CD8-positive, alpha-beta memory T cell (primary cell): ENCODE measurements at regions of chr17 and their contacts with region 1.

Region 1: GRCh38 chr17:59331129-59331928 is at the start of gene YPEL2:
- DNase-seq: peak; percentile 79 to 91 (median 86)
- H3K4me3 ChIP-seq: peak within 1 kb of the TSS; percentile 52
- H3K4me3 Mint-ChIP-seq: peak within 1 kb of the TSS; percentile 87 to 94 (median 92)
- H3K27ac ChIP-seq: peak within 1 kb of the TSS; percentile 48
- H3K27ac Mint-ChIP-seq: peak within 1 kb of the TSS; percentile 58 to 93 (median 86)
- H3K4me1 ChIP-seq: peaks cover 65% of the 10 kb centered on the region
- H3K4me1 Mint-ChIP-seq: peaks cover 52 to 79% (median 74%) of the 10 kb centered on the region in 3 donors
- H3K27me3 ChIP-seq: no peaks in the 10 kb centered on the region
- H3K27me3 Mint-ChIP-seq: no peaks in the 10 kb centered on the region
- total RNA-seq, gene YPEL2: 6.7 to 7.6 TPM

Region 2: DNA sequence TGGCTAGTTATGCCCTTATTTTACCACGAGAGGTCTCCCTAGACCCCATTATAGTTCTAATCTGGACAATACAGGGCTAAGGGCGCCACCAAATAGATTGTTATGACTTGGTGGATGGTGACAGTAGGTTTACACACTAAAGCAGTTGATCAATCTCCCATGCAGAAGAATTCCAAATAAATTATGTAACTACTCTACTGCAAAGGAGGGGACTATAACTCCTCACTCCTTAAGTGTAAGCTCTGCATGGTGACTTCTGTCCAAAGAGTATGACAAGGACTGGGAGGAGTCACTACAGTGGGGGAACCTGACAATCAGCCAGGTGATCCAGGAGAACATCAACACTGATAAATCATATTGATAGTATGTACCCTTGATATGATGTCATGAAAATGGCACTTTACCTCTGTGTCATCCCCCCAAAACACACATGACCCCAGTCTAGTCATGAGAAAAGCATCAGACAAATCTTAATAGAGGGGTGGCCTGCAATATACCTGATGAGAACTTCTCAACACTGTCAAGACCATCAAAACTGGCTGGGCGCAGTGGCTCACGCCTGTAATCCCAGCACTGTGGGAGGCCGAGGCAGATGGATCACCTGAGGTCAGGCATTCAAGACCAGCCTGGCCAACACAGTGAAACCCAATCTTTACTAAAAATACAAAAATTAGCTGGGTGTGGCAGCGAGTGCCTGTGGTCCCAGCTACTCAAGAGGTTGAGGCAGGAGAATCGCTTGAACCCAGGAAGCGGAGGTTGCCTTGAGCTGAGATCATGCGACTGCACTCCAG is 20.0 kb before region 1 on chr17:
- CTCF ChIA-PET with region 1: interaction called, 21 read pairs
- POLR2A ChIA-PET with region 1: no interaction called
- DNase-seq: peak in 3 of 5 donors; percentile 51 to 64 (median 51)
- H3K4me3 ChIP-seq: no peak overlapping the region
- H3K4me3 Mint-ChIP-seq: no peak overlapping the region
- H3K27ac ChIP-seq: no peak overlapping the region
- H3K27ac Mint-ChIP-seq: no peak overlapping the region
- H3K4me1 ChIP-seq: no peaks in the 10 kb centered on the region
- H3K4me1 Mint-ChIP-seq: peaks cover 0 to 6% (median 0%) of the 10 kb centered on the region in 3 donors
- H3K27me3 ChIP-seq: no peaks in the 10 kb centered on the region
- H3K27me3 Mint-ChIP-seq: peaks cover 0 to under 1% of the 10 kb centered on the region in 2 donors

Region 3: DNA sequence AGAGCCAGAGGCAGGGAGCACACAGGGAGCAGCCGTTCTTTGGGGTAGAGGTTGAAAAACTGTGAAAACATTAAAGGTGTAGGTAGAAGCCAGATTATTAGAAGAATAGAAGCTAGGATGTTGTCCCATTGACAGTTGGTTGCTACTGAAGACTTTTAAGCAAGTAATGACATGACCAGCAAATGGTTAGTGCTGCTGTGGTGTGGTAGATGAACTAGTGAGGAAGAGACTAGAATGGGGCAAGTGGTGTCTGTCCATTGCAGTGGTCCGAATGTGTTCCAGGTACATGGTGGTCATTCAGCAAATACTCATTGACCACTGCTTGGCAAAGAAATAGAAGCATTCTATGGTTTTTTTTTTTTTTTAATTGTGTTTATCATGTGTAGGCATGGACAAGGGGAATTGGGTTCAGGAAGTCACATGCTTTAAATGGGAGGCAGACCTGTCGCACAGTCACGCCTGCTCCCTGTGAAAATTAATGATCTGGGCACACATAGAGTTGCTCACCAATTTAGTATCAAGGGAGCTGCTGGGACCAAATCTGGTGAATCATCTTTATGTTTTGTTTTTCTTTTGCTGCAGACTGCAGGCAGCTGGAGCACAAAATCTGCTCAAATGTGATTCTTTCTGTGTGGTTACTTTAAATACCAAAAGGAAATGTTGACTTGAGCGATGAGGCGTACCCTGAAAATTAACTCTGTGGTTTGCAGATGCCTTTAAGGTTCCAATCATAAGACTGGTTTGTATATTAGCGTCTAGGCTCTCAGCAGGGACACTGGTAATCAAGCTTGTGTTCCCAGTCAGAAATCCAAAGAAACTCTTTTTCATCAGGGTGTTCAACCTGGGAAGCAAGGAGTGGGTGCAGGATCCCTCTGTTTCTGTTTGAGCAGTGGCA is 30.8 kb after region 1 on chr17:
- CTCF ChIA-PET with region 1: interaction called, 9 read pairs
- POLR2A ChIA-PET with region 1: interaction called, 14 read pairs
- DNase-seq: peak in 3 of 5 donors; percentile 30 to 72 (median 48)
- H3K4me3 ChIP-seq: peak overlapping the region; percentile 37
- H3K4me3 Mint-ChIP-seq: peak overlapping the region; percentile 32 to 80 (median 71)
- H3K27ac ChIP-seq: no peak overlapping the region
- H3K27ac Mint-ChIP-seq: peak overlapping the region; percentile 21 to 91 (median 66)
- H3K4me1 ChIP-seq: peaks cover 78% of the 10 kb centered on the region
- H3K4me1 Mint-ChIP-seq: peaks cover 72 to 91% (median 87%) of the 10 kb centered on the region in 3 donors
- H3K27me3 ChIP-seq: no peaks in the 10 kb centered on the region
- H3K27me3 Mint-ChIP-seq: no peaks in the 10 kb centered on the region

Region 4: GRCh38 chr17:59427425-59427921 is 96.1 kb after region 1 on chr17:
- CTCF ChIA-PET with region 1: interaction called, 12 read pairs
- POLR2A ChIA-PET with region 1: no interaction called
- DNase-seq: peak in 1 of 5 donors; percentile 16
- H3K4me3 ChIP-seq: no peak overlapping the region
- H3K4me3 Mint-ChIP-seq: no peak overlapping the region
- H3K27ac ChIP-seq: no peak overlapping the region
- H3K27ac Mint-ChIP-seq: peak overlapping the region in 1 of 8 donors; percentile 39
- H3K4me1 ChIP-seq: no peaks in the 10 kb centered on the region
- H3K4me1 Mint-ChIP-seq: peaks cover 0 to 4% (median 0%) of the 10 kb centered on the region in 3 donors
- H3K27me3 ChIP-seq: no peaks in the 10 kb centered on the region
- H3K27me3 Mint-ChIP-seq: peaks cover 0 to 3% of the 10 kb centered on the region in 2 donors

Region 5: GRCh38 chr17:59440784-59441441 is 109.6 kb after region 1 on chr17:
- CTCF ChIA-PET with region 1: interaction called, 137 read pairs
- POLR2A ChIA-PET with region 1: interaction called, 4 read pairs
- DNase-seq: peak; percentile 71 to 86 (median 74)
- H3K4me3 ChIP-seq: no peak overlapping the region
- H3K4me3 Mint-ChIP-seq: peak overlapping the region in 4 of 7 donors; percentile 5 to 22 (median 10)
- H3K27ac ChIP-seq: no peak overlapping the region
- H3K27ac Mint-ChIP-seq: peak overlapping the region in 2 of 8 donors; percentile 1 to 22
- H3K4me1 ChIP-seq: peaks cover 19% of the 10 kb centered on the region
- H3K4me1 Mint-ChIP-seq: peaks cover 5 to 20% (median 17%) of the 10 kb centered on the region in 3 donors
- H3K27me3 ChIP-seq: no peaks in the 10 kb centered on the region
- H3K27me3 Mint-ChIP-seq: peaks cover 0 to 9% of the 10 kb centered on the region in 2 donors